GM12878 (cell line): ENCODE measurements at regions of chr1 and their contacts with region 1.

Region 1: GRCh38 chr1:89762779-89763648 is 57.8 kb upstream of the LRRC8D start:
- DNase-seq: peak; percentile 40
- ATAC-seq: peak; percentile 100
- H3K4me3 ChIP-seq: peak overlapping the region; percentile 66
- H3K27ac ChIP-seq: no peak overlapping the region
- H3K4me1 ChIP-seq: peaks cover 5% of the 10 kb centered on the region; the same call in 1 of the 2 replicates
- H3K27me3 ChIP-seq: no peaks in the 10 kb centered on the region
- CTCF ChIP-seq: peak; percentile 95 to 99 (median 99); a peak in 5 of 6 replicates
- EP300 ChIP-seq: no peak
- POLR2A ChIP-seq: no peak
- RAD21 ChIP-seq: peak; percentile 98

Region 2: GRCh38 chr1:89350298-89350697 is 412.7 kb before region 1 on chr1:
- CTCF ChIA-PET with region 1: no interaction called
- POLR2A ChIA-PET with region 1: no interaction called
- RAD21 ChIA-PET with region 1: no interaction called
- SMC1A ChIA-PET with region 1: no interaction called
- in situ Hi-C with region 1: no loop called
- intact Hi-C with region 1: no loop called
- DNase-seq: no peak
- ATAC-seq: peak; percentile 74
- H3K4me3 ChIP-seq: no peak overlapping the region
- H3K27ac ChIP-seq: no peak overlapping the region
- H3K4me1 ChIP-seq: no peaks in the 10 kb centered on the region
- H3K27me3 ChIP-seq: peaks cover 0 to 3% of the 10 kb centered on the region in 2 experiments; a peak in 2 of 4 replicates
- CTCF ChIP-seq: no peak
- EP300 ChIP-seq: no peak; a peak in 1 of 4 replicates
- POLR2A ChIP-seq: no peak
- RAD21 ChIP-seq: no peak

Region 3: GRCh38 chr1:89512996-89513720 is 249.9 kb before region 1 on chr1:
- CTCF ChIA-PET with region 1: interaction called, 52 read pairs
- POLR2A ChIA-PET with region 1: no interaction called
- RAD21 ChIA-PET with region 1: interaction called, 5 read pairs
- SMC1A ChIA-PET with region 1: interaction called, 10 read pairs
- in situ Hi-C with region 1: no loop called
- intact Hi-C with region 1: loop called (anchors 2 kb)
- DNase-seq: no peak
- ATAC-seq: no peak
- H3K4me3 ChIP-seq: no peak overlapping the region
- H3K27ac ChIP-seq: no peak overlapping the region
- H3K4me1 ChIP-seq: no peaks in the 10 kb centered on the region
- H3K27me3 ChIP-seq: no peaks in the 10 kb centered on the region
- CTCF ChIP-seq: no peak
- EP300 ChIP-seq: no peak
- POLR2A ChIP-seq: no peak
- RAD21 ChIP-seq: no peak

Region 4: GRCh38 chr1:89605692-89606091 is 157.3 kb before region 1 on chr1:
- CTCF ChIA-PET with region 1: interaction called, 59 read pairs
- POLR2A ChIA-PET with region 1: interaction called, 3 read pairs
- RAD21 ChIA-PET with region 1: interaction called, 28 read pairs
- SMC1A ChIA-PET with region 1: interaction called, 124 read pairs
- in situ Hi-C with region 1: no loop called
- intact Hi-C with region 1: loop called (anchors 5 kb)
- DNase-seq: no peak
- ATAC-seq: no peak
- H3K4me3 ChIP-seq: no peak overlapping the region
- H3K27ac ChIP-seq: no peak overlapping the region
- H3K4me1 ChIP-seq: peaks cover 14% of the 10 kb centered on the region
- H3K27me3 ChIP-seq: no peaks in the 10 kb centered on the region; a peak in 1 of 4 replicates
- CTCF ChIP-seq: no peak
- EP300 ChIP-seq: no peak
- POLR2A ChIP-seq: no peak
- RAD21 ChIP-seq: no peak

Region 5: GRCh38 chr1:89641781-89642180 is 121.2 kb before region 1 on chr1:
- CTCF ChIA-PET with region 1: interaction called, 369 read pairs
- POLR2A ChIA-PET with region 1: interaction called, 9 read pairs
- RAD21 ChIA-PET with region 1: interaction called, 302 read pairs
- SMC1A ChIA-PET with region 1: interaction called, 391 read pairs
- in situ Hi-C with region 1: no loop called
- intact Hi-C with region 1: no loop called
- DNase-seq: no peak
- ATAC-seq: no peak
- H3K4me3 ChIP-seq: no peak overlapping the region
- H3K27ac ChIP-seq: no peak overlapping the region
- H3K4me1 ChIP-seq: no peaks in the 10 kb centered on the region
- H3K27me3 ChIP-seq: no peaks in the 10 kb centered on the region
- CTCF ChIP-seq: no peak
- EP300 ChIP-seq: no peak
- POLR2A ChIP-seq: no peak
- RAD21 ChIP-seq: no peak

Region 6: GRCh38 chr1:89675677-89676076 is 87.3 kb before region 1 on chr1:
- CTCF ChIA-PET with region 1: interaction called, 9 read pairs
- POLR2A ChIA-PET with region 1: interaction called, 4 read pairs
- RAD21 ChIA-PET with region 1: interaction called, 10 read pairs
- SMC1A ChIA-PET with region 1: interaction called, 28 read pairs
- in situ Hi-C with region 1: no loop called
- intact Hi-C with region 1: no loop called
- DNase-seq: no peak
- ATAC-seq: no peak
- H3K4me3 ChIP-seq: no peak overlapping the region
- H3K27ac ChIP-seq: no peak overlapping the region
- H3K4me1 ChIP-seq: peaks cover 16% of the 10 kb centered on the region
- H3K27me3 ChIP-seq: no peaks in the 10 kb centered on the region
- CTCF ChIP-seq: no peak
- EP300 ChIP-seq: no peak
- POLR2A ChIP-seq: no peak
- RAD21 ChIP-seq: no peak

Region 7: GRCh38 chr1:89728381-89728780 is 34.6 kb before region 1 on chr1:
- CTCF ChIA-PET with region 1: interaction called, 13 read pairs
- POLR2A ChIA-PET with region 1: interaction called, 4 read pairs
- RAD21 ChIA-PET with region 1: interaction called, 6 read pairs
- SMC1A ChIA-PET with region 1: interaction called, 8 read pairs
- in situ Hi-C with region 1: no loop called
- intact Hi-C with region 1: no loop called
- DNase-seq: no peak
- ATAC-seq: no peak
- H3K4me3 ChIP-seq: no peak overlapping the region
- H3K27ac ChIP-seq: no peak overlapping the region
- H3K4me1 ChIP-seq: peaks cover 32% of the 10 kb centered on the region
- H3K27me3 ChIP-seq: no peaks in the 10 kb centered on the region
- CTCF ChIP-seq: no peak
- EP300 ChIP-seq: no peak
- POLR2A ChIP-seq: no peak
- RAD21 ChIP-seq: no peak

Region 8: GRCh38 chr1:89987170-89987819 is 224.3 kb after region 1 on chr1:
- CTCF ChIA-PET with region 1: interaction called, 10 read pairs
- POLR2A ChIA-PET with region 1: no interaction called
- RAD21 ChIA-PET with region 1: interaction called, 3 read pairs
- SMC1A ChIA-PET with region 1: interaction called, 4 read pairs
- in situ Hi-C with region 1: no loop called
- intact Hi-C with region 1: no loop called
- DNase-seq: peak; percentile 45
- ATAC-seq: peak; percentile 94
- H3K4me3 ChIP-seq: no peak overlapping the region
- H3K27ac ChIP-seq: no peak overlapping the region
- H3K4me1 ChIP-seq: no peaks in the 10 kb centered on the region
- H3K27me3 ChIP-seq: no peaks in the 10 kb centered on the region
- CTCF ChIP-seq: peak; percentile 78 to 92 (median 88); a peak in 5 of 6 replicates
- EP300 ChIP-seq: no peak
- POLR2A ChIP-seq: no peak
- RAD21 ChIP-seq: peak; percentile 98

Region 9: GRCh38 chr1:90986953-90987352 is 1223.9 kb after region 1 on chr1:
- CTCF ChIA-PET with region 1: no interaction called
- POLR2A ChIA-PET with region 1: no interaction called
- RAD21 ChIA-PET with region 1: no interaction called
- SMC1A ChIA-PET with region 1: no interaction called
- in situ Hi-C with region 1: no loop called
- intact Hi-C with region 1: no loop called
- DNase-seq: no peak
- ATAC-seq: no peak; the same call in 2 of the 3 replicates
- H3K4me3 ChIP-seq: no peak overlapping the region
- H3K27ac ChIP-seq: no peak overlapping the region
- H3K4me1 ChIP-seq: peaks cover 8% of the 10 kb centered on the region
- H3K27me3 ChIP-seq: no peaks in the 10 kb centered on the region
- CTCF ChIP-seq: no peak
- EP300 ChIP-seq: no peak
- POLR2A ChIP-seq: no peak
- RAD21 ChIP-seq: no peak